Activated B cell treated with CpG ODN at 0.5 μM for 24 hours (primary cell): ENCODE measurements at regions of chrX and their contacts with region 1.

Region 1: GRCh38 chrX:51461053-51462044 is 35.0 kb downstream of the NUDT11 start:
- DNase-seq: no peak
- ATAC-seq: no peak
- H3K4me3 Mint-ChIP-seq: no peak overlapping the region
- H3K27ac Mint-ChIP-seq: no peak overlapping the region
- H3K4me1 Mint-ChIP-seq: no peaks in the 10 kb centered on the region
- H3K27me3 Mint-ChIP-seq: no peaks in the 10 kb centered on the region
- CTCF ChIP-seq: no peak

Region 2: GRCh38 chrX:51144852-51145442 is 316.4 kb before region 1 on chrX:
- CTCF ChIA-PET with region 1: interaction called, 3 read pairs
- POLR2A ChIA-PET with region 1: no interaction called
- intact Hi-C with region 1: loop called (anchors 1 kb)
- DNase-seq: no peak
- ATAC-seq: peak; percentile 45
- H3K4me3 Mint-ChIP-seq: no peak overlapping the region
- H3K27ac Mint-ChIP-seq: no peak overlapping the region
- H3K4me1 Mint-ChIP-seq: no peaks in the 10 kb centered on the region
- H3K27me3 Mint-ChIP-seq: peaks cover 2% of the 10 kb centered on the region
- CTCF ChIP-seq: no peak

Region 3: GRCh38 chrX:51336584-51336983 is 124.8 kb before region 1 on chrX:
- CTCF ChIA-PET with region 1: interaction called, 21 read pairs
- POLR2A ChIA-PET with region 1: no interaction called
- intact Hi-C with region 1: loop called (anchors 1 kb)
- DNase-seq: no peak
- ATAC-seq: peak; percentile 71
- H3K4me3 Mint-ChIP-seq: no peak overlapping the region
- H3K27ac Mint-ChIP-seq: no peak overlapping the region
- H3K4me1 Mint-ChIP-seq: peaks cover 9% of the 10 kb centered on the region
- H3K27me3 Mint-ChIP-seq: peaks cover 1% of the 10 kb centered on the region
- CTCF ChIP-seq: no peak

Region 4: GRCh38 chrX:51395810-51396728 is 65.3 kb before region 1 on chrX:
- CTCF ChIA-PET with region 1: no interaction called
- POLR2A ChIA-PET with region 1: no interaction called
- intact Hi-C with region 1: loop called (anchors 10 kb)
- DNase-seq: peak; percentile 32
- ATAC-seq: peak; percentile 70
- H3K4me3 Mint-ChIP-seq: peak overlapping the region; percentile 93
- H3K27ac Mint-ChIP-seq: peak overlapping the region; percentile 91
- H3K4me1 Mint-ChIP-seq: peaks cover 31% of the 10 kb centered on the region
- H3K27me3 Mint-ChIP-seq: no peaks in the 10 kb centered on the region
- CTCF ChIP-seq: no peak